GM12878 (cell line): ENCODE measurements at regions of chr4 and their contacts with region 1.

Region 1: DNA sequence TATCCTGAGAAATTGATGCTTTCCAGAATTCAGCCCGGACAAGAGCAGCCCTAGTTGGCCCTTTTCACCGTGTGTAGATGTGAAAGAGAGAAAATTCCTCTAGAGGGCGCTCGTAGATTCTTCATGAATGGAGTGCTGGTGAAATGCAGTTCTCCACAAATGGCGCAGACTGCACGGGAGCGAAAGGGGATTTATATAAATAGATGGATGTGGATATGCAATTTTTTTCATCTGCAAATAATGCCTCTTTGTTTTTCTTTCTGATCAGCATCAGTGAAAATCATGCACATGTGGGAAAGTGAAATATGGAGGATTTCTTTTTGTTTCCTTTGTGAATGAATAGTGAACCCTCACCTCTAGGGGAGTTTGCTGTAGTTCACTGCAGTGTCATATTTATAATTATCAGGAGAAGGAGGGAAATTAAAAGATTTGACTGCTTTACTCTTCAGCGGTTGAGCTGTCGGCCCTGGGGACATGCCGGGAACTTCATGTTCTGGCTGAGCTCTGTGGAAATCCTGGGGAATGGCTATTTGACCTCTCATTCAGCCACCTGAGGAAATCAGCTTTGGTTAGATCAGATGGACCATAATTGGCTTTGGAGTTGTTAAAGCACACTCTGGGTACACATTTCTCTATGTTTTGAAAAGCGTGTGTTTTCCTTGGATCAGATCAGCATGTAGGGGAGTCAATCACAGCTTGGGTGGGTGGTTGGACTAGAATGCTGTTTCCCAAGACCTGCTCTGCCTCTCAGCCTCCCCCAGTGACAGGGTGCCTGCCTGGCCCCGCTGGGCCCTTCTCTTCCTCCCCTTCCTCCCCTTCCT is 115.0 kb upstream of the SHISA3 start:
- DNase-seq: peak; percentile 33
- ATAC-seq: peak; percentile 89
- H3K4me3 ChIP-seq: no peak overlapping the region
- H3K27ac ChIP-seq: no peak overlapping the region
- H3K4me1 ChIP-seq: peaks cover 28% of the 10 kb centered on the region
- H3K27me3 ChIP-seq: no peaks in the 10 kb centered on the region
- CTCF ChIP-seq: peak; percentile 66 to 76 (median 74)
- EP300 ChIP-seq: no peak
- POLR2A ChIP-seq: no peak
- RAD21 ChIP-seq: peak; percentile 94

Region 2: DNA sequence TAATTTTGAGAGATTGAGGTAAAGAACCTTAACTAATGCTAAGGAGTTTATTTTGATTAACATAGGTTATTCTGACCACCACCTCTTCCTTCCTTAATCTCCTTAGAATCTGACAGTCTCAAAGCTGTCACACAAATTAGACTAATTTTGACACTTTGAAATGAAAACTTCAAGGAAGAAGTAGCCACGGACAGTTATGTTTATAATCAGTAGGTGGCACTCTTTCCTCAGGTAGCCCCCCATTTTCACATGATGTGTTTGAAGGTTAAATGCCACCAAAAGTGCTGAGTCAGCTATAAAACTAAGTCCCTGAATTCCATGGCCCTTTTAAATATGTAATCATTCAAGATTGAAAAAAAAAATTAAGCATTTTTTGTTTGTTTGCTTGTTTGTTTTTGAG is 324.7 kb before region 1 on chr4:
- CTCF ChIA-PET with region 1: interaction called, 17 read pairs
- POLR2A ChIA-PET with region 1: no interaction called
- RAD21 ChIA-PET with region 1: no interaction called
- SMC1A ChIA-PET with region 1: interaction called, 4 read pairs
- in situ Hi-C with region 1: no loop called
- intact Hi-C with region 1: loop called (anchors 1 kb)
- DNase-seq: peak; percentile 20
- ATAC-seq: peak; percentile 76
- H3K4me3 ChIP-seq: no peak overlapping the region
- H3K27ac ChIP-seq: no peak overlapping the region
- H3K4me1 ChIP-seq: no peaks in the 10 kb centered on the region
- H3K27me3 ChIP-seq: no peaks in the 10 kb centered on the region
- CTCF ChIP-seq: peak; percentile 43 to 59 (median 57); a peak in 5 of 6 replicates
- EP300 ChIP-seq: no peak
- POLR2A ChIP-seq: no peak
- RAD21 ChIP-seq: peak; percentile 74

Region 3: DNA sequence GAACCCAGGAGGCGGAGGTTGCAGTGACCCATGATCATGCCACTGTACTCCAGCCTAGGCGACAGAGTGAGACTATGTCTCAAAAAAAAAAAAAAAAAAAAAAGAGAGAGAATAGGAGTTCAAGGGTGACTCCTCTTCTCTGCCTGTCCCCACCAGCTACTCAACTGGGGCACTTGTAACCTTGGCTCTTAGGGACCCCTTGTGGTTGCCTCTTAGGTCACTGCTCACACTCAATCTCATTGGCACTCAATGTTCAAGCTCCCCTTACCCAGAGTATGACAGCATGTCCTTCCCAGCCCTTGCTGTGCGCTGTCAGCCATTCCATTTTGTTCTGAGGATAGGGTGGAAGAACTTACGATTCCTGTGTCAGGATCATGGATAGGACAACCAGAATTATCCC is 47.5 kb before region 1 on chr4:
- CTCF ChIA-PET with region 1: no interaction called
- POLR2A ChIA-PET with region 1: no interaction called
- RAD21 ChIA-PET with region 1: no interaction called
- SMC1A ChIA-PET with region 1: no interaction called
- in situ Hi-C with region 1: no loop called
- intact Hi-C with region 1: no loop called
- DNase-seq: no peak
- ATAC-seq: no peak
- H3K4me3 ChIP-seq: no peak overlapping the region
- H3K27ac ChIP-seq: no peak overlapping the region
- H3K4me1 ChIP-seq: no peaks in the 10 kb centered on the region
- H3K27me3 ChIP-seq: no peaks in the 10 kb centered on the region; a peak in 1 of 4 replicates
- CTCF ChIP-seq: no peak
- EP300 ChIP-seq: no peak
- POLR2A ChIP-seq: no peak
- RAD21 ChIP-seq: no peak

Region 4: DNA sequence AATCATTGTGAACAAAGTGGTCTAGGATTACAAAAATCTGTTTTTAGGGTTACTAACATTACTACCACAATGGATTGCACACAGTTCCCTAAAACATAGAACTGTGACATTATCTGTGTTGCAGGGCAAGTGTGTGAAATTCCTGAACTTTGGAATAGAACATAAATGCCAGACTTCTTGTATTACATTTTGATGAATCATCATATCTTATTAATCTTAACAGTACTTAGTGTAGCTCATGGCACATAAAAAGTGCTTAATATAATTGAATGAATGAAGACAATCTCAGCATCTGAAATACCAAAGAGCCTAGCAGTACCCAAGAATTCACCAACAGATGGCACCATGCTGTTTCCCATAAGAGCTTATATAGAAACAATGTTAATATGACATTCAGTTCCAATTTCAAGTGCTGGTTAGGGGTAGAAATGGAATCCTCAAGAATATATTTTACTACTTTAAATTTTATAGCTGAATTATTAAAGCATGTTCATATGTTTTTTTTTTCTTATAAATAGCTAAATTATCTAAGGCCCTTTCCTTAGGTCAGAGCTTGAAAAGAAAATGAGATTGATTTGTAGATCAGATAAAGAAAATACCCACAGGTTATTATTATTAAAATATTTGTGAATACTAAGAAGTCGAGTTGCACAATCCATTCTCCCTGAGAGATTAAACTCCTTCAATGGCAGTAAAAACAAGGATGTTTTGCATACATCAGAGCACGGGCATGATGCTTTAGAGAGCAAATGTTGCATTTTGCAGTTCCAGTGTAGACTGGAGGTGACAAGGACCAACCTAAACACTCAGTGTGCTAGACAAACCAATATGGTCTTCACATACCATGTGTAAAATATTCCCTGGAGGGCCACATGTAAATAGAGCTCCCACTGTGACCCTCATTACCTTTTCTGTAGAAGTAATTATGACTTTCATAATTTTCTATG is 89.3 kb after region 1 on chr4:
- CTCF ChIA-PET with region 1: interaction called, 46 read pairs
- POLR2A ChIA-PET with region 1: no interaction called
- RAD21 ChIA-PET with region 1: interaction called, 7 read pairs
- SMC1A ChIA-PET with region 1: interaction called, 20 read pairs
- in situ Hi-C with region 1: no loop called
- intact Hi-C with region 1: loop called (anchors 5 kb)
- DNase-seq: no peak
- ATAC-seq: peak; percentile 82
- H3K4me3 ChIP-seq: no peak overlapping the region
- H3K27ac ChIP-seq: no peak overlapping the region
- H3K4me1 ChIP-seq: no peaks in the 10 kb centered on the region
- H3K27me3 ChIP-seq: no peaks in the 10 kb centered on the region
- CTCF ChIP-seq: peak; percentile 58 to 66 (median 64); a peak in 5 of 6 replicates
- EP300 ChIP-seq: no peak
- POLR2A ChIP-seq: no peak
- RAD21 ChIP-seq: peak; percentile 80

Region 5: GRCh38 chr4:42489095-42489494 is 206.8 kb after region 1 on chr4:
- CTCF ChIA-PET with region 1: interaction called, 11 read pairs
- POLR2A ChIA-PET with region 1: no interaction called
- RAD21 ChIA-PET with region 1: interaction called, 3 read pairs
- SMC1A ChIA-PET with region 1: no interaction called
- in situ Hi-C with region 1: no loop called
- intact Hi-C with region 1: no loop called
- DNase-seq: peak; percentile 62
- ATAC-seq: peak; percentile 90
- H3K4me3 ChIP-seq: peak overlapping the region; percentile 62
- H3K27ac ChIP-seq: peak overlapping the region; percentile 92
- H3K4me1 ChIP-seq: peaks cover 32% of the 10 kb centered on the region
- H3K27me3 ChIP-seq: no peaks in the 10 kb centered on the region
- CTCF ChIP-seq: no peak
- EP300 ChIP-seq: peak in 1 of 2 experiments; percentile 57; a peak in 2 of 4 replicates
- POLR2A ChIP-seq: no peak
- RAD21 ChIP-seq: no peak

Region 6: DNA sequence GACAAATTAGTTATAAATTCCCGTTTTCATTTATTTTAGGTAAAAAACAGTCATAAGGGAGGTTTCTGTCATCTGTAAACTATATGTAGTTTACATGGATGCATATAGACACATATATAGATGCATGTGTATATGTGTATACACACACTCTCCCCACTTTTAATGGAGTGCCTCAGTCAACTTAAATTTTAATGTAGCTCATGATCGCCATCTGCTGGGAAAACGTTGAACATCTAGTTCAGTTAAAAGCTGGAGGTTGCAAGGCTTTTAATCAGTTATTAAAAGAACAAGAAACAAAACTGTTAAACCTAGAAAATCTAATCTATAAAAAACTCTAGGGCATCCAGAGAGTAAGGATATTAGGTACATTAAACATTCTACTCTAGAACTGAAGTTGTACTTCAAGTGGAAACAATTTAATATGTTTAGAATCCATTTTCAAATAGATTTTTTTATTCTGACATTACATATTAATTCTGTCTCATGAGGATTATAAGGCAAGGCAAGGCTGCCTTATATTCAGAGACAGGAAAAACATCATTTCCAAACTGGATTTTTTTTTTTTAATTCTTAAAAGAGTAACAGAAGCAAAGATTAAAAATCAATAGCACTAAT is 237.6 kb after region 1 on chr4:
- CTCF ChIA-PET with region 1: interaction called, 54 read pairs
- POLR2A ChIA-PET with region 1: no interaction called
- RAD21 ChIA-PET with region 1: interaction called, 35 read pairs
- SMC1A ChIA-PET with region 1: interaction called, 29 read pairs
- in situ Hi-C with region 1: loop called (anchors 5 kb)
- intact Hi-C with region 1: loop called (anchors 1 kb)
- DNase-seq: peak; percentile 19
- ATAC-seq: peak; percentile 88
- H3K4me3 ChIP-seq: no peak overlapping the region
- H3K27ac ChIP-seq: no peak overlapping the region
- H3K4me1 ChIP-seq: peaks cover 9% of the 10 kb centered on the region
- H3K27me3 ChIP-seq: no peaks in the 10 kb centered on the region
- CTCF ChIP-seq: peak; percentile 41 to 59 (median 45); a peak in 5 of 6 replicates
- EP300 ChIP-seq: no peak
- POLR2A ChIP-seq: no peak
- RAD21 ChIP-seq: peak; percentile 82

Region 7: GRCh38 chr4:42871671-42872290 is 589.5 kb after region 1 on chr4:
- CTCF ChIA-PET with region 1: no interaction called
- POLR2A ChIA-PET with region 1: no interaction called
- RAD21 ChIA-PET with region 1: no interaction called
- SMC1A ChIA-PET with region 1: no interaction called
- in situ Hi-C with region 1: loop called (anchors 10 kb)
- intact Hi-C with region 1: no loop called
- DNase-seq: no peak
- ATAC-seq: no peak
- H3K4me3 ChIP-seq: no peak overlapping the region
- H3K27ac ChIP-seq: no peak overlapping the region
- H3K4me1 ChIP-seq: no peaks in the 10 kb centered on the region
- H3K27me3 ChIP-seq: no peaks in the 10 kb centered on the region
- CTCF ChIP-seq: no peak
- EP300 ChIP-seq: no peak
- POLR2A ChIP-seq: no peak
- RAD21 ChIP-seq: no peak